IMR-90 (cell line): ENCODE measurements at regions of chr3 and their contacts with region 1.

Region 1: GRCh38 chr3:346186-346585 is 149.6 kb downstream of the CHL1 start:
- DNase-seq: peak; percentile 78
- ATAC-seq: peak; percentile 92
- H3K4me3 ChIP-seq: no peak overlapping the region
- H3K27ac ChIP-seq: no peak overlapping the region
- H3K4me1 ChIP-seq: peaks cover 2% of the 10 kb centered on the region; the same call in 1 of the 2 replicates
- H3K27me3 ChIP-seq: no peaks in the 10 kb centered on the region
- CTCF ChIP-seq: no peak
- POLR2A ChIP-seq: no peak
- RAD21 ChIP-seq: no peak

Region 2: DNA sequence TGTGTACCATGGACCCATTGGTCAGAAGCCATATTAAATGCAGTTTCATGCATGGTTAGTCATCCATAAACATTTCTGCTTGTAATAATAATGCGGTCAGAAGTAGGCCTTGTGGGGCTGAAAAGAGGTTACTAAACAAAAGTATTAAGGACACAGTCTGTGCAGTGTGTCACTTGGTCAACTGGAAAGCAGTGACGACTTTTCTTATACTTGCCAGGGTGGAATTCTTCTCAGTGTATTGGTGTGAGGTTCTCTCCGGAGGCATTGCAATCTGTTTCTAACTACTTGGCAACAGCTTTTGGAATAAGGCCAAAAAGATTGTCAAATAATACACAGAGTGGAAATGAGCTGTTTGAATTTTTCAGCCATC is 102.8 kb before region 1 on chr3:
- CTCF ChIA-PET with region 1: no interaction called
- POLR2A ChIA-PET with region 1: no interaction called
- dilution Hi-C with region 1: no loop called
- in situ Hi-C with region 1: no loop called
- intact Hi-C with region 1: loop called (anchors 5 kb)
- DNase-seq: peak; percentile 92
- ATAC-seq: peak; percentile 86
- H3K4me3 ChIP-seq: no peak overlapping the region
- H3K27ac ChIP-seq: no peak overlapping the region
- H3K4me1 ChIP-seq: peaks cover 2% of the 10 kb centered on the region; the same call in 1 of the 2 replicates
- H3K27me3 ChIP-seq: no peaks in the 10 kb centered on the region
- CTCF ChIP-seq: no peak
- POLR2A ChIP-seq: no peak
- RAD21 ChIP-seq: no peak

Region 3: GRCh38 chr3:270688-271087 is 75.5 kb before region 1 on chr3:
- CTCF ChIA-PET with region 1: no interaction called
- POLR2A ChIA-PET with region 1: no interaction called
- dilution Hi-C with region 1: no loop called
- in situ Hi-C with region 1: no loop called
- intact Hi-C with region 1: no loop called
- DNase-seq: no peak
- ATAC-seq: no peak
- H3K4me3 ChIP-seq: no peak overlapping the region
- H3K27ac ChIP-seq: no peak overlapping the region
- H3K4me1 ChIP-seq: no peaks in the 10 kb centered on the region
- H3K27me3 ChIP-seq: no peaks in the 10 kb centered on the region
- CTCF ChIP-seq: no peak
- POLR2A ChIP-seq: no peak
- RAD21 ChIP-seq: no peak